Activated CD4-positive, alpha-beta T cell treated with anti-CD3 and anti-CD28 coated beads, Interleukin-2, amount 10 ng/mL, durations not matched to agents 7 days and 5 days (primary cell): ENCODE measurements at regions of chr19 and their contacts with region 1.

Region 1: DNA sequence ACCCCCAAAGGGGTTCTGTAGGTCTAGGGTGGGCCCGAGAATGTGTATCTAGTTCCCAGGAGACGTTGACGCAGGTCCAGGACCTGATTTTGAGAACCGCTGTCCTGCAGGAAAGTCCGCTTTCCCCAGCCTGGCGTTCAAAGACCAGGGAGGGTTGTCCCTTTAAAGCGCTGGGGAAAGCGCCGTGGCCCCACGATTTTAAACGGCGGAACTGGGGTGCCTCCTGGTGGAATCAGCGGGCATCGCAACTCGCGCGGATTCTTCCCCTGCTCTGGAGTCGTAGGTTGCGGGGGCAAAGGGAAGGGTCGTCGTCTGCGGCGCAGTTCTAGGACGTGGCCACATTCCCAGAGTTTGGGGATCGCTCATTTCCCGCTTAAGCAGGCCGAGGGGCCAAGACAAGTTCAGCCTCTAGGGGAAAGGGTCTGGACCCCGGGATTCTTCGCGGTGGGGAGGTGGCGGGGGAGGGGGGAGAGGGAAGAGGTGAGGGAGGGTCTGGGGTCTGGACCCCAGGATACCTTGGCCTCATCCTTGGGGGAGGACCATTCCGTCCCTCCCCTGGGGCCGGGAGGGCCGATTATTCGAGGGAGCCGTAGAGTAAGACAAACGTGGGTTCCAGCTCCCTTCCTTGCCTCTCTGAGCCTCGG is 7.7 kb downstream of the PNMA8B start:
- DNase-seq: peak; percentile 74
- H3K4me3 Mint-ChIP-seq: no peak overlapping the region
- H3K27ac Mint-ChIP-seq: no peak overlapping the region
- H3K4me1 Mint-ChIP-seq: peaks cover 2% of the 10 kb centered on the region
- H3K27me3 Mint-ChIP-seq: peaks cover 72% of the 10 kb centered on the region

Region 2: DNA sequence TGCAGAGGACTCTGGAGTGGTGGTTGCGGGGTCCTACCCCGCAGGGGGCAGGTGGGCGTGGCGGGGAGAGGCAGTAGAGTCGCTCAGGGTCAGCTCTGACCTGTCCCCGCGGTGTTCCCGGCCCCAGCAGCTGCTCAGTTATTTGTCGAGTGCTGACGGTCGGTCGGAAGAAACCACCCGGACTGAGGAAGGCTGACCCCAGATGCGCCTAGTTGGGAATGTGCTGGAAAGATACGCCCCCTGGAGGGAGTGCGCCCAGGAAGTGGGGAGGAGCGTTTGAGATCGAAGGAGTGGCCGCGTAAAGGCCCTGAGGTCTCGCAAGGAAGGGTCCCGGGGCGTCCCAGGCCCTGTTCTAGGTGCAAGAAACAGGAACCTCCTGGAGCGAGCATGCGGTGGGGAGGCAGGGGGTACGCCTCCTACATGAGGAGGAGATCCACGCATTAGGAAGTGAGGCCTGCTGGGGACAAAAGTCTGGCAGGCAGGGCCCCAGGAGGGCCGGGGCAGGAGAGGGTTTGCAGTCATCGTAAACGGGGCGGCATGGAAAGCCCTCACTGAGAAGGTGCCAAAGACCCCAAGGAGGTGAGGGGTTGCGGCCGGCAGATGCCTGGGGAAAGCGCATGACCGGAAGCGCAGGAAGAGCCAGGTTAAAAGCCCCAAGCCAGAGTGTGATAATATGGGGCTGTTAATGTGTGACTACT is 83.7 kb before region 1 on chr19:
- CTCF ChIA-PET with region 1: interaction called, 13 read pairs
- POLR2A ChIA-PET with region 1: no interaction called
- DNase-seq: no peak
- H3K4me3 Mint-ChIP-seq: no peak overlapping the region
- H3K27ac Mint-ChIP-seq: no peak overlapping the region
- H3K4me1 Mint-ChIP-seq: peaks cover 14% of the 10 kb centered on the region
- H3K27me3 Mint-ChIP-seq: peaks cover 49% of the 10 kb centered on the region

Region 3: GRCh38 chr19:46499692-46500091 is 11.8 kb after region 1 on chr19:
- CTCF ChIA-PET with region 1: no interaction called
- POLR2A ChIA-PET with region 1: no interaction called
- DNase-seq: no peak
- H3K4me3 Mint-ChIP-seq: no peak overlapping the region
- H3K27ac Mint-ChIP-seq: no peak overlapping the region
- H3K4me1 Mint-ChIP-seq: peaks cover 3% of the 10 kb centered on the region
- H3K27me3 Mint-ChIP-seq: peaks cover 44% of the 10 kb centered on the region

Region 4: GRCh38 chr19:46542428-46543230 is 54.7 kb after region 1 on chr19:
- CTCF ChIA-PET with region 1: no interaction called
- POLR2A ChIA-PET with region 1: no interaction called
- DNase-seq: peak; percentile 85
- H3K4me3 Mint-ChIP-seq: no peak overlapping the region
- H3K27ac Mint-ChIP-seq: no peak overlapping the region
- H3K4me1 Mint-ChIP-seq: peaks cover 5% of the 10 kb centered on the region
- H3K27me3 Mint-ChIP-seq: peaks cover 2% of the 10 kb centered on the region